ENCODE measurements at regions of chr9 and their contacts with region 1.

Region 1: DNA sequence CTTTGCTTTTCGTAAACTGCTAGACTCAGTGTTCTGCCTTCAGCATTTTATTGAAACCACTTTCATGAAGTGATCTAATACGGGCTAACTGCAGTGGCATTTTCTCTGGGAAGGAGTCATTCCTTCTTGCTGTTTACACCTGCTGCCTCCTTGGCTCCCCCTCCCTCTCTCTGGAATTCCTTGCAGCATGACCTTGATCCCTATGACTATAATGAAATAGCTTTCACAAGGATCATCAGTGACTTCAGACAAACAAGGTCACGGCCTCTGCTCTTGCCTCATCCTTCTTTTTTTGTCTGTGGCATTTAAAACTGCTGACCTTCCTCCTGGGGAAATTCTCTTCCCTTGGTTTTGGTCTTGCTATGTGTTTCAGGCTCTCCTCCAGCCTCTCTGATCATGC is 90.2 kb downstream of the ZNF462 start:
- DNase-seq: no peak
- ATAC-seq: no peak
- H3K4me3 ChIP-seq: no peak overlapping the region
- H3K4me3 Mint-ChIP-seq: no peak overlapping the region
- H3K27ac ChIP-seq: no peak overlapping the region
- H3K27ac Mint-ChIP-seq: no peak overlapping the region
- H3K4me1 ChIP-seq: no peaks in the 10 kb centered on the region
- H3K4me1 Mint-ChIP-seq: peaks cover 6% of the 10 kb centered on the region
- H3K27me3 ChIP-seq: no peaks in the 10 kb centered on the region
- H3K27me3 Mint-ChIP-seq: no peaks in the 10 kb centered on the region
- CTCF ChIP-seq: no peak

Region 2: GRCh38 chr9:106753155-106753671 is 200.0 kb before region 1 on chr9:
- CTCF ChIA-PET with region 1: no interaction called
- POLR2A ChIA-PET with region 1: no interaction called
- intact Hi-C with region 1: loop called in 1 of 2 experiments (anchors 10 kb)
- DNase-seq: peak in 3 of 14 experiments; percentile 7 to 36 (median 24)
- ATAC-seq: no peak
- H3K4me3 ChIP-seq: no peak overlapping the region
- H3K4me3 Mint-ChIP-seq: no peak overlapping the region
- H3K27ac ChIP-seq: no peak overlapping the region
- H3K27ac Mint-ChIP-seq: no peak overlapping the region
- H3K4me1 ChIP-seq: no peaks in the 10 kb centered on the region
- H3K4me1 Mint-ChIP-seq: no peaks in the 10 kb centered on the region
- H3K27me3 ChIP-seq: no peaks in the 10 kb centered on the region
- H3K27me3 Mint-ChIP-seq: no peaks in the 10 kb centered on the region
- CTCF ChIP-seq: no peak

Measured in CD4-positive, alpha-beta T cell (primary cell).